Mammary epithelial cell (primary cell): ENCODE measurements at regions of chr5 and their contacts with region 1.

Region 1: DNA sequence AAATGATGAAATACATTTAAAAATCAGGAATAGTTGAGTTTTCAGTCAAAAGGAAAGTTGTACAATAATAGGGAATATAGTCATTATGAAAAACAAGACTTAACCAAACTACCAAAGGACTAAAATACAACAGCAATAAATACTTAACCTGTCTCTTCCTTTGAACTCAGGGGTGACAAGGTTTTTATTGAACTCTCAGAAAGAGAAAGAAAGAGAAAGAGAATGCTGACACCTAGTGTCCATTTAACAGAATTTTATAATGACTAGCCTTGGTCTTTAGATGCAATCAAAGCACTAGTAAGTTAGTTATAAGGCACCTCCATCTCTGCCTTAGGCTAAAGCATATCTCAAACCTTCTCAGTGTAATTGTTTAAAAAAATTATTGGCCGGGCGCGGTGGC is 47.5 kb downstream of the UIMC1 start:
- DNase-seq: peak; percentile 14
- H3K4me3 ChIP-seq: no peak overlapping the region
- H3K27ac ChIP-seq: no peak overlapping the region
- H3K4me1 ChIP-seq: peaks cover 12% of the 10 kb centered on the region
- H3K27me3 ChIP-seq: no peaks in the 10 kb centered on the region
- CTCF ChIP-seq: peak; percentile 38 to 40

Region 2: GRCh38 chr5:176817841-176818377 is 141.1 kb before region 1 on chr5:
- CTCF ChIA-PET with region 1: no interaction called
- dilution Hi-C with region 1: no loop called
- in situ Hi-C with region 1: no loop called
- intact Hi-C with region 1: loop called (anchors 10 kb)
- DNase-seq: no peak
- H3K4me3 ChIP-seq: peak overlapping the region in 2 of 3 experiments; percentile 36 to 37
- H3K27ac ChIP-seq: no peak overlapping the region
- H3K4me1 ChIP-seq: peaks cover 23% of the 10 kb centered on the region
- H3K27me3 ChIP-seq: peaks cover 5% of the 10 kb centered on the region
- CTCF ChIP-seq: peak; percentile 24 to 48

Region 3: DNA sequence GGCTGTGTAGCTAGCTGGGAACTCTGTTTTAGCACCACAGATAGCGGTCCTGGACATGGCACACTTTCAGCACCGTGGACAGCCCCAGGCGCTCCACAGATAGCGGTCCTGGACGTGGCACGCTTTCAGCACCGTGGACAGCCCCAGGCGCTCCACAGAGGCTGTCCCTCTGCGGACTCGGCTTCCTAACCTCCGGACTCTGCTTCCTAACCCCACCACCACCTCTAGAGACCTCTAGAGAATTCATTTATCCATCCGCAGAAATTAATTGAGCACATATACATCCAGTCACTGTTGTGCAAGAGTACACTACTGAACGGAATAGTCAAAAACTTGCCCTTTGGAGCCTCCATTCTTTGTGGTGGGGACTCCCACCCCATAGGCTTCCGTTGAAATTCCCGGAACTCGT is 121.3 kb before region 1 on chr5:
- CTCF ChIA-PET with region 1: no interaction called
- dilution Hi-C with region 1: no loop called
- in situ Hi-C with region 1: no loop called
- intact Hi-C with region 1: no loop called
- DNase-seq: peak; percentile 74
- H3K4me3 ChIP-seq: no peak overlapping the region
- H3K27ac ChIP-seq: no peak overlapping the region
- H3K4me1 ChIP-seq: no peaks in the 10 kb centered on the region
- H3K27me3 ChIP-seq: peaks cover 7% of the 10 kb centered on the region
- CTCF ChIP-seq: no peak